ENCODE measurements at regions of chr6 and their contacts with region 1.

Region 1: GRCh38 chr6:54846243-54846856 is at the start of gene FAM83B:
- DNase-seq: peak; percentile 61
- ATAC-seq: peak; percentile 89
- H3K4me3 ChIP-seq: peak within 1 kb of the TSS; percentile 77 to 89
- H3K27ac ChIP-seq: peak within 1 kb of the TSS; percentile 79
- H3K4me1 ChIP-seq: peaks cover 6 to 29% of the 10 kb centered on the region in 2 experiments; a peak in 3 of 4 replicates
- H3K27me3 ChIP-seq: no peaks in the 10 kb centered on the region
- CTCF ChIP-seq: no peak
- POLR2A ChIP-seq: peak; percentile 60
- RAD21 ChIP-seq: 0 out of 2 replicates have a peak, but pooled peaks have one; percentile 8
- total RNA-seq, gene FAM83B: 16.9 TPM

Region 2: DNA sequence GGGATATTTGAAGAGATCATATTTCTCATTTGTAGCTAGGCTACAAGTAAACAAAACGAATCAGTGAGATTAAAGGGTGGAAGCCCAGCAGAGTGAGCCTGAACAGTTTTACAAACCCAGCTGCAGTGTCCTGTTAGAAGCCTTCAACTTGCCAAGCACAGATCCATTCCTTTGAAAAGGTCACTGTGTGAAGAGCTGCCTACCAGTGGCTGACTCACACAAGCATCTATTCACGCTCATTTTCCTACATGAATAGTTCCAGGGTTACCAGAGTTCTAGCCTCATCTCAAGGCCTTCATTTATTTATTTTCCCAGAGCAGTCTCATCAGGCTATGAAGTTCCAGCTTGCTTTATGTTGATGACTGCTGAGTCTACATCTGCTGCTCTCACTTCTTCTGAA is 760.8 kb before region 1 on chr6:
- CTCF ChIA-PET with region 1: no interaction called
- POLR2A ChIA-PET with region 1: no interaction called
- RAD21 ChIA-PET with region 1: no interaction called
- intact Hi-C with region 1: no loop called
- DNase-seq: no peak
- ATAC-seq: no peak
- H3K4me3 ChIP-seq: no peak overlapping the region
- H3K27ac ChIP-seq: no peak overlapping the region
- H3K4me1 ChIP-seq: no peaks in the 10 kb centered on the region; a peak in 1 of 4 replicates
- H3K27me3 ChIP-seq: no peaks in the 10 kb centered on the region
- CTCF ChIP-seq: no peak
- POLR2A ChIP-seq: no peak
- RAD21 ChIP-seq: no peak

Region 3: DNA sequence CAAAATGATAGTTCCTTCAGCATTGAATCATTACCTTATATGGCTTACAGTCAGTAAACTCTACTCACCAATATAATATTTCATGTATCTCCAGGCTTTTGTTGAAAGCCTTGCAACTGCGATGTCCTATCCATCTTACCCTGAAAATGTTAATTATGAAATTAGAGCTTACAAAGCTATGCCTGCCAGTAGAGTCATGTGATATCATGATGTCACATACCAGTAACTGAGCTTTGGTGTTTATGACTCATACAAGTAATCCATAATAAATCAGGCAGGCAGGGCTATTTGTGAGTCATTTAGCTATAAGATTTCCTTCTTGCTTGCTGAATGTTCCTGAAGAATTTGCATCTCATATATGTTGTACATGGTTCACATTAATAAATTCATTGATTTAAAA is 44.7 kb before region 1 on chr6:
- CTCF ChIA-PET with region 1: no interaction called
- POLR2A ChIA-PET with region 1: no interaction called
- RAD21 ChIA-PET with region 1: no interaction called
- intact Hi-C with region 1: loop called (anchors 5 kb)
- DNase-seq: peak; percentile 83
- ATAC-seq: peak; percentile 86
- H3K4me3 ChIP-seq: peak overlapping the region; percentile 7 to 18; a peak in 2 of 4 replicates
- H3K27ac ChIP-seq: no peak overlapping the region
- H3K4me1 ChIP-seq: peaks cover 11 to 22% of the 10 kb centered on the region in 2 experiments; a peak in 3 of 4 replicates
- H3K27me3 ChIP-seq: no peaks in the 10 kb centered on the region
- CTCF ChIP-seq: no peak
- POLR2A ChIP-seq: no peak
- RAD21 ChIP-seq: no peak

Region 4: GRCh38 chr6:54827010-54827409 is 19.3 kb before region 1 on chr6:
- CTCF ChIA-PET with region 1: no interaction called
- POLR2A ChIA-PET with region 1: no interaction called
- RAD21 ChIA-PET with region 1: no interaction called
- intact Hi-C with region 1: no loop called
- DNase-seq: no peak
- ATAC-seq: no peak
- H3K4me3 ChIP-seq: no peak overlapping the region
- H3K27ac ChIP-seq: no peak overlapping the region
- H3K4me1 ChIP-seq: no peaks in the 10 kb centered on the region
- H3K27me3 ChIP-seq: no peaks in the 10 kb centered on the region
- CTCF ChIP-seq: no peak
- POLR2A ChIP-seq: no peak
- RAD21 ChIP-seq: no peak

Region 5: DNA sequence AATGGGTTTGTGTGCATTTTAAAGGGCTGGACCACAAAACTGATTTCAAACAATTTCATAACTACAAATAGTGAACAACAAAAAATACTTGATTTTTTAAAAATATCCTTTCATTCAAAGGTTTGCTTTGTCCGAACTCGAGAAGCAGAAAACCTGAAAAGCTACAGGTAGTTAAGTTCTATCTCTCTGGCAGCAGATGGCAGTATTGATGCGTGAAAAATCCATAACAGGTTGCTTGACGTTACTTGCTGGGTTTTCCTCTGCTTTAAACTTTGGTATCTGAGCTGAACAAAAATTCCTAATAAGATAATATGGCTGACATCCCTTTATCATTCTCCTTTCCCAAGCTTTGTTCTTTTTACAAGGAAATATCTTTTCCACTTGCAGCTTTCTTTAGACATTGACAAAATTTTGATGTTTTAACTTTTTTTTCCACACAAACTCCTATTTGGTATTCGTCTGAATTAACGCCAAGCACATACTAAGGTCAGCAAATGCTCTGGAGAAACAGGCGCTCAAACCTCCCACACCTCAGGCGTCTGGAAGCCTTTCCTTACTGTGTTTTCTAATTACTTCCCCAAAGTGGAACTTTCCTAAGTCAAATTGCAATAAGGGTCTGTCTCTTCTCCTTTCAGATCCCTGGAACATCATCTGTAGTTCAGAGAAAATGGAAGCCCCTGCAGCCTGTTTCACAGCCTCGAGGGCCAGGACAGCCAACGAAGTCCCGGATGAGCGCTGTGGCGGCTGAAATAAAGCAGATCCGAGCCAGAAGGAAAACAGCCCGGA is 430.6 kb after region 1 on chr6:
- CTCF ChIA-PET with region 1: no interaction called
- POLR2A ChIA-PET with region 1: no interaction called
- RAD21 ChIA-PET with region 1: no interaction called
- intact Hi-C with region 1: no loop called
- DNase-seq: peak; percentile 58
- ATAC-seq: peak; percentile 75
- H3K4me3 ChIP-seq: no peak overlapping the region
- H3K27ac ChIP-seq: no peak overlapping the region
- H3K4me1 ChIP-seq: 0 out of 4 replicates have a peak, but pooled peaks cover 0 to 4% of the 10 kb centered on the region in 2 experiments
- H3K27me3 ChIP-seq: 0 out of 2 replicates have a peak, but pooled peaks cover 4% of the 10 kb centered on the region
- CTCF ChIP-seq: peak; percentile 58 to 69 (median 59); a peak in 5 of 6 replicates
- POLR2A ChIP-seq: no peak
- RAD21 ChIP-seq: peak; percentile 77